RWPE1 (cell line): ENCODE measurements at regions of chr19 and their contacts with region 1.

Region 1: DNA sequence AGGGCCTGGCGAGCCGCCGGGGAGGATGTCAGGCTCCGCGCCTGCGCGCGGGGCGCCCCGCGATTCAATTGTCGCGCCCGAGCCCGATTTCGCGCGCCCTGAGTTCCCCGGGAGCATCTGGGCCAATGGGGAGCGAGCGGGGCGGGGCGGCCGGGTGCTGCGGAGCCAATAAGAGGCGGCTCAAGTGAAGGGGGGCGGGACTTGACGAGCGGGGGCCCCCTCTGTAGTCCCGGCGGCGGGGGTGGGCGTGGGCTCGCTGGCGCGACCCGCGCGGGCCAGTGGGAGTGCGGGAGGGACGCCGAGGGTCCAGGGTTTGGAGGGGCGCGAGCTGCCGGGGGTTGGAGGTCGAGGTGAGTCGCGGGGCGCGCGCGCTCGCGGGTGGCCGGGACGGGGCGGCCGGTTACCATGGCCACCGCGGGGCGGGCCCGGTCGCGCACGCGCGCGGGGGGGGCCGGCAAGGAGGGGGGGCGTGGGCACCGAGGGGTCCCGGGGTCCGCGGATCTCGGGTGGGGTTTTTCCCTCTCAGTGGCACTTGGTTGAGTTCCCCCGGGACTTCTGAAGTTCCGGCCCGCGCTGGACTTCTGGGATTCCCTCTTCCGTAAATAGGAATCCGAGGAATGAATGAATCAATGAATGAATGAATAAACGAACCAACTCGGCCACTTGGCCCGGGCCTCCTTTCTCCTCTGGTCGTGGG is 744 bp downstream of the UHRF1 start:
- DNase-seq: peak; percentile 94
- H3K27ac ChIP-seq: peak overlapping the region; percentile 94
- CTCF ChIP-seq: no peak

Region 2: DNA sequence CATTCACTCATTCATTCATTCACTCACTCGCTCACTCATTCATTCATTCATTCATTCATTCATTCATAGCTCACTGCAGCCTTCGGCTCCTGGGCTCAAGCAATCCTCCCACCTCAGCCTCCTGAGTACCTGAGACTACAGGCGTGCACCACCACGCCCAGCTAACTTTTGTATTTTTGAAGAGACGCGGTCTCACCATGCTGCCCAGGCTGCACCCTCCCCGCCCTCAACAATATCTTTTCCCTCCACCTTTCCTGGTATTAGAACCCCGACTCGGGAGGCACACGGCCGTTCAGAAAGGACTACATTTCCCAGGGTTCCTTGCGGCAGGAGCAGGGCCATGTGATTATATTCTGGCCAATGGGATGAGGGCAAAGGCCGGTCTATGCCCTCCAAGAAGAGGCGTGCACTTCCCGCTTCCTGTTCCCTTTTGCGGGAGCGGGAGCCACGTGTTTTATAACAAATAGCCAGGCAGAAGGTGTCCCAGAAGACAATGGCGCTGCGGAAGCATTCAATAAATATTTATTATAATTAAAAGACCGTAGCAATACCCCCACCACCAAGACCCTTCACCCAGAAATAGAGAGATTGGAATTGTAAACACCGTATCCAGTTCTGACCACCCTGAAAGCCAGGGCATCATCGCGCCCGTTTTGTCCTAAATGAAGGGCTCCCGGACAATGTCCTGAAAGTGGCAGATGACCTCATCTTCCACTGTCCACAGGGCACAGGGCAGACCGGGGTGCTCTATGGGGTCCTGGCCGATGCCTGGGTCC is 94.4 kb before region 1 on chr19:
- CTCF ChIA-PET with region 1: interaction called, 23 read pairs
- POLR2A ChIA-PET with region 1: no interaction called
- DNase-seq: peak; percentile 98
- H3K27ac ChIP-seq: peak overlapping the region; percentile 63
- CTCF ChIP-seq: no peak

Region 3: DNA sequence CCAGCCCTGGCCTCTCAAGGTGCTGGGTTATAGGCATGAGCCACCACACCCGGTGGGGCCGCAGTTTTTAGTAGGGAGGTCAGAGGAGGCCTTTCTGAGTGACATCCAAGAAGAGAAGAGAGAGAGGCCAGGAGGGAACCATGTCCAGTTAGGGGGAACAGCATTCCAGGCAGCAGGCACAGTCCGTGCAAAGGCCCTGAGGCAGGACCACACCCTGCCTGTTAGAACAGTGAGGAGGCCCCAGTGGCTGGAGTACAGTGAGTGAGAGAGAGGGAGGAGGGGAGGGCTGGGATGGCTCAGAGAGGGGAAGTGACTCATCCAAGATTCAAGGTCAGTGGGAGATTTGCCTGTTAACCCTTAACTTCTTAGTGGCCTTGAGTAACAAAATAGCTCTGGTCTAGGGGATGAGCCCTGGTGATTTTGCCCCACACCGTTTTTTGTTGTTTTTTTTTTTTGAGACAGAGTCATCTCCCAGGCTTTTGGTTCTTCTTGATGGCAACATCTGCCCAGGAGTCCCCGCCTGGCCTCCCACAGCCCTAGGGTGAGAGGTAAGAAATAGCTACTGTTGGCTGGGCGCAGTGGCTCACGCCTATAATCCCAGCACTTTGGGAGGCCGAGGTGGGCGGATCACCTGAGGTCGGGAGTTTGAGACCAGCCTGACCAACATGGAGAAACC is 39.9 kb before region 1 on chr19:
- CTCF ChIA-PET with region 1: interaction called, 13 read pairs
- POLR2A ChIA-PET with region 1: interaction called, 3 read pairs
- DNase-seq: peak; percentile 90
- H3K27ac ChIP-seq: peak overlapping the region; percentile 87
- CTCF ChIP-seq: no peak